HEK293 (cell line): ENCODE measurements at regions of chr11 and their contacts with region 1.

Region 1: GRCh38 chr11:110124605-110125004 is 31.4 kb downstream of the ZC3H12C start:
- H3K4me3 ChIP-seq: no peak overlapping the region
- H3K27ac ChIP-seq: no peak overlapping the region
- H3K4me1 ChIP-seq: peaks cover 8% of the 10 kb centered on the region; the same call in 1 of the 2 replicates
- CTCF ChIP-seq: no peak

Region 2: DNA sequence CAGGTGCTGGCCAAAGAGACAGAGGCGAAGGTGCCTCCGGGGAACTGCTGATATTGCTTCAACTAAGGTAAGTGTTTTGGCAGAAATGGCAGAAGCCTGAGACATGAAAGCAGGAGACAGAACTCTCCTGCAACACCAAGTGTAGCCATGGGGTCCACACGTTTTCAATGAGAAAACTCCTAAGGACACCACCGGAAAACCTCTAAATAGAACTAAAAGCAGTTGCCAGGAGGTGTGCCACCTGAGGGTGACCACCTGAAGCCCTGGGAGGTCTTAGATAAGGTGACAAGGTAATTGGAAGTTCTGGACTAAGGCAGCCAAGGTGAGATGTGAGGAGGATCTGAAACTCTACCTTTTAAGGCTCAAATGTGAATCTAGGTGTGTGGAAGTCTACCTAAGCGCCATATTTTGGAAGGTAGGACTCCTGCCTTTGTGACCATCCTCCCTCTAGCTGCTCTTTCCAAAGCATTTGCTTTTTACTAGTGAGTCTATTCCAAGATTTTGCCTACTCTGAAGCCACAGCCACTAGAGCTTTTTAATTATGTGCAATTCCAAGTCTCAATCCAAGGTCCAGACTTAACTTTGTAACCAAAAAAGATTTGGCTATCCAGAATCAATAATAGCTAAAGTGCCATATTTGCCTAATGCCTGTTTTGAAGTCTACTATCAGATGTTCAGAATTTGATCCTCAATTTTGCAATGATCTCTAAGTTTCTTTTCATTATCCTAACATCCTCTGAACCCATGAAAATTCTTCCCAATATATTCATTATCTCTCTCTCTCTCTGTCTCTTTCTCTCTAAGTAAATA is 35.9 kb before region 1 on chr11:
- CTCF ChIA-PET with region 1: interaction called, 10 read pairs
- POLR2A ChIA-PET with region 1: no interaction called
- H3K4me3 ChIP-seq: no peak overlapping the region
- H3K27ac ChIP-seq: no peak overlapping the region
- H3K4me1 ChIP-seq: no peaks in the 10 kb centered on the region
- CTCF ChIP-seq: no peak